Right cardiac atrium (tissue), 5 donors: ENCODE measurements at regions of chr11 and their contacts with region 1.

Region 1: DNA sequence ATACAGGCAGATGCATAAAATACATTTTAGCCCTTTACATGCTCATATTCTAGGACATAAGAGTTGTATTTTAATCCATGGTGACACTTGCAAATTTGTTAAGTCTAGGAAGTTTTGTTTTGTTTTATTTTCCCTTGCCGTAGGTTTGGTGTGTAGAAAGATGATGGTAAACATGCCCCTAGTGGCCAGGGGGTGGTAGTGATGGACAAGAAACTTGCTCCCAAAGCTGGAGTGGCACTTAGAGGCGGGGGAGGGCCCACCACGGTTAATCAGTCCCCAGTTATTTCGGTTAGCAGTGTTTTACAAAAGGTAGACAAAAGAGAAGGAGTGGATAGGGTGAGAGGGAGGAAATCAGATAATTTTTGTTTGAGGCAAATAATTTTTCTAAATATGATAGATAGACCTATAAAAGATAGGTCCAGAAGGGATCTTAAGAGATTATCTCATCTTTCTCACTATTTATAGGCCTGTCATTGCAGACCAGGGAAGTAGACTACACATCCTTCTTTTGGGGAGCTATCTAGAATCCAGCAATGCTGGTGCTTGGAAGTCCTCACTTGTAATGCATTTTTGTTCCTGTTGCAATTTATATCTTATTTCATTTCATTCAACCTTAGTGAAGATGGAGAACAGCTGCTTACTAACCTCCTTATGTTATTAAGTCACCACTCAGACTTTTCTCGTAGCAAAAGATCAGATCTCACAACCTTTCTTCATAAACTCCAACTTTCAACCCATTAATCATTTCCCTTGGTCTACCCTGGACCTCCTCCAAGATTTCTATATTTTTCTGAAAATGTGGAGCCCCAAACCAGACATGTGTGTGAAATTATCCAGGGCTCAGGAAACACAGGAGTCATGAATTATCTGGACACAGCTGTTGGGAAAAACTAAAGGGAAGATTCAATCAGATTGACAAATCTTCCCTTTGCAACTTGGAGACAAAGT is 5.9 kb upstream of the BDNF start:
- DNase-seq: no peak
- ATAC-seq: no peak
- H3K4me3 ChIP-seq: no peak overlapping the region
- H3K27ac ChIP-seq: no peak overlapping the region
- H3K4me1 ChIP-seq: peaks cover 5% of the 10 kb centered on the region
- H3K27me3 ChIP-seq: peaks cover 4% of the 10 kb centered on the region

Region 2: GRCh38 chr11:28697920-28698827 is 992.0 kb after region 1 on chr11:
- intact Hi-C with region 1: loop called in 2 of 4 experiments (anchors 10 kb)
- DNase-seq: peak; percentile 48 to 66 (median 62)
- ATAC-seq: peak; percentile 45 to 63
- H3K4me3 ChIP-seq: no peak overlapping the region
- H3K27ac ChIP-seq: no peak overlapping the region
- H3K4me1 ChIP-seq: no peaks in the 10 kb centered on the region
- H3K27me3 ChIP-seq: no peaks in the 10 kb centered on the region

Region 3: GRCh38 chr11:29333993-29334775 is 1628.0 kb after region 1 on chr11:
- intact Hi-C with region 1: loop called in 1 of 4 experiments (anchors 10 kb)
- DNase-seq: no peak
- ATAC-seq: no peak
- H3K4me3 ChIP-seq: no peak overlapping the region
- H3K27ac ChIP-seq: no peak overlapping the region
- H3K4me1 ChIP-seq: no peaks in the 10 kb centered on the region
- H3K27me3 ChIP-seq: no peaks in the 10 kb centered on the region